ENCODE measurements at regions of chr2 and their contacts with region 1.

Region 1: GRCh38 chr2:42964439-42965083 is 172.2 kb upstream of the HAAO start:
- DNase-seq: no peak
- H3K4me3 Mint-ChIP-seq: no peak overlapping the region
- H3K27ac Mint-ChIP-seq: no peak overlapping the region
- H3K4me1 Mint-ChIP-seq: peaks cover 6% of the 10 kb centered on the region
- H3K27me3 Mint-ChIP-seq: peaks cover 12% of the 10 kb centered on the region

Region 2: GRCh38 chr2:42585821-42586221 is 378.7 kb before region 1 on chr2:
- CTCF ChIA-PET with region 1: no interaction called
- POLR2A ChIA-PET with region 1: no interaction called
- intact Hi-C with region 1: no loop called
- DNase-seq: no peak
- H3K4me3 Mint-ChIP-seq: no peak overlapping the region
- H3K27ac Mint-ChIP-seq: no peak overlapping the region
- H3K4me1 Mint-ChIP-seq: peaks cover 2% of the 10 kb centered on the region
- H3K27me3 Mint-ChIP-seq: no peaks in the 10 kb centered on the region

Region 3: GRCh38 chr2:42974721-42975717 is 10.5 kb after region 1 on chr2:
- CTCF ChIA-PET with region 1: interaction called, 12 read pairs
- POLR2A ChIA-PET with region 1: no interaction called
- intact Hi-C with region 1: no loop called
- DNase-seq: peak; percentile 61
- H3K4me3 Mint-ChIP-seq: no peak overlapping the region
- H3K27ac Mint-ChIP-seq: no peak overlapping the region
- H3K4me1 Mint-ChIP-seq: peaks cover 13% of the 10 kb centered on the region
- H3K27me3 Mint-ChIP-seq: no peaks in the 10 kb centered on the region

Region 4: DNA sequence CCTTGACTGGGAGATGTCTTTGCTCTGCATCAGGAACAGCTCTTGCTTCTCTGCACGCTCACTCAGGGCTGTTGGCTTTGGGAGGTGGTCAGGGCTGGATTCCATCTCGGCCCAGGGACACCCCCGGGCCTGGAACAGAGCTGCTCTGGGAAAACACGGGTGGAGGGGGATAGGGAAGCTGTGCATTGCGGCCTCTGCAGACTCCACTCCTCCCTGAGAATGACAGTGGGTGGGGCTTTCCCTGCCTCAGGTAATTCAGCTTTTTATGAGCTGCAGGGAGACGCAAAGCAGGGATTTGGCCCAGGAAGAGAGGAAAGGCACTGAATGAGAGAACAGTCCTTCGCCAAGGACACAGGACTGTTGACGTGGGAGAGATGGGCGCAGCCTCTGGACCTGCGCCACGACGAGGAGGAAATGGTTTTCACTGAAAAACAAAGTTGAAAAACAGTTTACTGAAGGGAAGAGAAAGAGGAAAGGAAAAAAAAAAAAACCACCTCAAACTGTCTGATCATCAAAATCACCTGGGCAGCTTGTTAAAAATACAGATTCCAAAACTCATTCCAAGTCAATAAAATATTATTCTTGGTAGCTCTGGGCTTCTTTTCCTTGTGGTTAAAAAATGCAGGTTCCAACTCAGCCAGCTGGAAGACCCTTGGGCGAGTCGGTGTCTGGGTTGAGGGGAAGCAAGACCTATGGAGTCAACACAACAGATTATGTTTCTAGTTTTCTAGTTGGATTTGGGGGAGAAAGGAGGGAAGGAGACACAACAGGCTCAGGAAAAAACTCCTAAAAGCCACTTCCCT is 67.9 kb after region 1 on chr2:
- CTCF ChIA-PET with region 1: no interaction called
- POLR2A ChIA-PET with region 1: no interaction called
- intact Hi-C with region 1: no loop called
- DNase-seq: no peak
- H3K4me3 Mint-ChIP-seq: no peak overlapping the region
- H3K27ac Mint-ChIP-seq: no peak overlapping the region
- H3K4me1 Mint-ChIP-seq: peaks cover 11% of the 10 kb centered on the region
- H3K27me3 Mint-ChIP-seq: no peaks in the 10 kb centered on the region